ENCODE measurements at regions of chr19 and their contacts with region 1.

Region 1: DNA sequence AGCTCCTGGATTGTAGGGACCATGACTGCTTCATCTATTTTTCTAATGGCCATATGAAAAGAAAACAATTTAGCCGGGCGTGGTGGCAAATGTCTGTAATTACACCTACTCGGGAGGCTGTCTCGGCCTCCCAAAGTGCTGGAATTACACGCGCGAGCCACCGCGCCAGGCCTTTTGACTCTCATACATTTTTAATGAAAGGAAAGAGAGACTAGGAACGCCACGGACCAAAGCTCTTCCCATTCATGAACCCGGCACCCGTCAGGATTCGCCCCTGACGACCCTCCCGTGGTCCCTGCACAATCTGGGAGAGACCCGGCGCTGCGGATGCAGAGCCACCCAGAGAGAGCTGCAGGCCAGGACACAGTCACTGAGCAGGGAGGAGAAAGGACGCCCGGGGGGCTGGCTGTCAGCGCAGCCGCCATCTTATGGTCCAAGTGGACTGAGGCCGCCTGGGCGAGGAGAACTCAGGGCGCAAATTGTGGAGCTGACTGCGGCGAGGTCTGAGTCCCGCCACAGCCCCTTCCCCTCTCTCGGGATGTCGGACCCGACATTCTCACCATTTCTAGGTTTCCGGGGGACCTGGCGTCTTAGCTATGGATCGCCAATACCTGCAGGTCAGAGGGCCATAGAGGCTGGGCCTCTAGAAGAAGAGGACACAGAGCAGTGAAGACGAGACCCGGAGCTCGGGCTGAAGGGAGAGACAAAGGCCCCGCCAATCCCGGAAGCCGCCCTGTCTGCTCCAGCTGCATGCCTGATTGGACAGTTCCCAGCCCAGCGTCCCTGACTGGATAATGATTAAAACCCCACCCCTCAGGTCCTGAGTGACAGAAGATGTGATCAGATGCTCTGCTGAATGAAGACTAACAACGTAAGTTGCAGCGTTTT is at the start of gene ZNF681:
- DNase-seq: peak; percentile 68 to 95 (median 88)
- ATAC-seq: peak; percentile 84 to 91
- H3K4me3 Mint-ChIP-seq: peak within 1 kb of the TSS; percentile 89 to 97 (median 96)
- H3K27ac Mint-ChIP-seq: peak within 1 kb of the TSS; percentile 93 to 99 (median 98)
- H3K4me1 Mint-ChIP-seq: peaks cover 16 to 46% (median 36%) of the 10 kb centered on the region in 4 donors
- H3K27me3 Mint-ChIP-seq: no peaks in the 10 kb centered on the region
- polyA plus RNA-seq, gene ZNF681: 3.5 to 4.7 (median 4.7) TPM

Region 2: DNA sequence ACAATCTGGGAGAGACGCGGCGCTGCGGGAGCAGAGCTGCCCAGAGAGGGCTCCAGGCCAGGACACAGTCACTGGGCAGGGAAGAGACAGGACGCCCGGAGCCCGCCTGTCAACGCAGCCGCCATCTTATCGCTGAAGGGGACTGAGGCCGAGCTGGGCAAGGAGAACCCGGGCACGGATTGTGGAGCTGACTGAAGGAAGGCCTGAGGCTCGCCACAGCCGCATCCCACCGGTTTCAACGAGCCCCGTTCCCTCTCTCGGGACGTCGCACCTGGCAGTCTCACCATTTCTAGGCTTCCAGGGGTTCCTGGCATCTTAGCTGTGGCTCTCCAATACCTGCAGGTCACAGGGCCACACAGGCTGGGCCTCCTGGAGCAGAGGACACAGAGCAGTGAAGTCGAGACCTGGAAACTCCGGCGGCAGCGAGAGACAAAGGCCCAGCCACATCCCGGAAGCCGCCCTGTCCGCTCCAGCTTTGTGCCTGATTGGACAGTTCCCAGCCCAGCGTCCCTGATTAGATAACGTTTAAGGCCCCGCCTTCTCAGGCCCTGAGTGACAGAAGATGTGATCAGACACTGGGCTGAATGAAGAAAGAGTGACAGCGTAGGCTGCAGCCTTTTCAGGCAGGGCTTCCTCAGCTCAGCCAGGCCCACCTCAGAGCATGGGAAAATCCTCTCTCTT is 363.2 kb before region 1 on chr19 and contains the start of gene ZNF91:
- POLR2A ChIA-PET with region 1: interaction called, 12 read pairs
- DNase-seq: peak; percentile 77 to 97 (median 92)
- ATAC-seq: peak; percentile 94 to 95
- H3K4me3 Mint-ChIP-seq: peak within 1 kb of the TSS; percentile 93 to 99 (median 96)
- H3K27ac Mint-ChIP-seq: peak within 1 kb of the TSS; percentile 94 to 99 (median 99)
- H3K4me1 Mint-ChIP-seq: peaks cover 11 to 44% (median 36%) of the 10 kb centered on the region in 4 donors
- H3K27me3 Mint-ChIP-seq: no peaks in the 10 kb centered on the region
- polyA plus RNA-seq, gene ZNF91: 44.2 to 53.8 (median 51.7) TPM

Region 3: GRCh38 chr19:23686621-23687423 is 71.6 kb before region 1 on chr19 and contains the start of gene ZNF675:
- POLR2A ChIA-PET with region 1: interaction called, 43 read pairs
- DNase-seq: peak; percentile 72 to 95 (median 88)
- ATAC-seq: peak; percentile 92 to 94
- H3K4me3 Mint-ChIP-seq: peak within 1 kb of the TSS; percentile 97 to 100 (median 99)
- H3K27ac Mint-ChIP-seq: peak within 1 kb of the TSS; percentile 97 to 100 (median 99)
- H3K4me1 Mint-ChIP-seq: peaks cover 15 to 62% (median 45%) of the 10 kb centered on the region in 4 donors
- H3K27me3 Mint-ChIP-seq: no peaks in the 10 kb centered on the region
- polyA plus RNA-seq, gene ZNF675: 16.3 to 18.5 (median 18.1) TPM

Region 4: DNA sequence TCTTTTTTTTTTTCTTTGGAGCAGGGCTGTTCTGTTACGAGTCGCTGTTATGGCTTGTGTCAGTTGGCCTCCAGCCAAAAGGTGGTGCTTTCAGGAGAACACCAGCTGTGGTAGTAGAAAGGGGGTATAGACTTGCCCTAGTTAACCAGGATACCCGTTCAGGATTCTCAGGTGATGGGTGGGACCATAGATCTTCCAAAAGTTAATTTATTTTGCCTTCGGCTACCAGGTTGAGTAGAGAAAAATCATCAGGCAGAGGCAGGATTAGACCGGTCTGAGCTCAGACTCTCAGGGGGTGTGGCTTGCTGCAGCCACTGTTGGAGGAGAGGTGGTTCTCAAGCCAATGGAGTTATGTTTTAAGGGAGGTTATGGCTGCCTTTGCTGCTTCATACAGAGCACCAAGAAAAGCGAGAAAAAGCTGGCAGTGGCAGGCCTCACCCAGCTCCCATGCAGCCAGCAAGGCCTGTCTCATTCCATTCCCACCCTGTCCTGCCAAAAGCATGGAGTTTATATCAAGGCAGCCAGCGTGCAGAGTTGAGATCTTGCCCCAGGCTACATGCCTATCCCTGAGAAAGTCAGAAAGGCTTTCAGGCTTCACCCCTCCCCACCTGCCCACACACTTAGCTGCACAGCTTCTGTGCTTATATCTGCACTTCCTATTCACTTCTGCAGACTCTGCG is 59.2 kb before region 1 on chr19:
- POLR2A ChIA-PET with region 1: interaction called, 13 read pairs
- DNase-seq: peak in 6 of 10 donors; percentile 10 to 42 (median 30)
- ATAC-seq: peak; percentile 88 to 94
- H3K4me3 Mint-ChIP-seq: peak overlapping the region; percentile 30 to 80 (median 65)
- H3K27ac Mint-ChIP-seq: peak overlapping the region; percentile 64 to 94 (median 84)
- H3K4me1 Mint-ChIP-seq: peaks cover 0 to 13% (median 4%) of the 10 kb centered on the region in 4 donors
- H3K27me3 Mint-ChIP-seq: peaks cover 0 to 7% (median 0%) of the 10 kb centered on the region in 5 donors

Region 5: GRCh38 chr19:23774524-23774971 is 16.1 kb after region 1 on chr19:
- POLR2A ChIA-PET with region 1: no interaction called
- DNase-seq: no peak
- ATAC-seq: no peak
- H3K4me3 Mint-ChIP-seq: no peak overlapping the region
- H3K27ac Mint-ChIP-seq: no peak overlapping the region
- H3K4me1 Mint-ChIP-seq: peaks cover 4 to 37% (median 16%) of the 10 kb centered on the region in 4 donors
- H3K27me3 Mint-ChIP-seq: no peaks in the 10 kb centered on the region

Region 6: GRCh38 chr19:23810496-23810895 is 52.1 kb after region 1 on chr19:
- POLR2A ChIA-PET with region 1: no interaction called
- DNase-seq: no peak
- ATAC-seq: no peak
- H3K4me3 Mint-ChIP-seq: no peak overlapping the region
- H3K27ac Mint-ChIP-seq: no peak overlapping the region
- H3K4me1 Mint-ChIP-seq: no peaks in the 10 kb centered on the region
- H3K27me3 Mint-ChIP-seq: no peaks in the 10 kb centered on the region

Measured in naive thymus-derived CD8-positive, alpha-beta T cell (primary cell).